ENCODE measurements at regions of chr1 and their contacts with region 1.

Region 1: GRCh38 chr1:20981915-20982314 is 194.8 kb downstream of the EIF4G3 start:
- DNase-seq: no peak
- ATAC-seq: no peak

Region 2: DNA sequence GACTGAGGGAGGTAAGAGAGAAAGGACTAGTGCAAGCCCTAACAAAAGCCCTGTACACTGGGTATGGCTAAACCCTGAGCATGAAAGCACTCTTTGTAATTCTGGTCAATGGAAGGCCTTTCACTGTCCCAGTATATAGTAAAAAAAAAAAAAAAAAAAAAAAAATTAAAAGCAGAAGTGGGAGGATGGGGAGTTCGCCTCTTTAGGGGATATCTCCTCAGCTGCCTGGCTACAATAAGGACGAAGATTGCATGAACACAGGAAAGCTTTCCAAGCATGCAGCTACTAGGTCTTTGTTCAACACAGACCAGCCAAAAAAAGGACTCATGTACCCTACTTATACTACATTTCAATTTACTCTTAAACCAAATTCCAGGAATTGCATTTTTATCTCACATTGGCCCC is 135.7 kb after region 1 on chr1:
- intact Hi-C with region 1: no loop called
- DNase-seq: no peak
- ATAC-seq: peak; percentile 81

Region 3: GRCh38 chr1:21176586-21177555 is 195.0 kb after region 1 on chr1 and contains the start of gene EIF4G3:
- intact Hi-C with region 1: loop called (anchors 5 kb)
- DNase-seq: peak; percentile 97
- ATAC-seq: peak; percentile 98
- total RNA-seq, gene EIF4G3: 25.6 TPM

Region 4: DNA sequence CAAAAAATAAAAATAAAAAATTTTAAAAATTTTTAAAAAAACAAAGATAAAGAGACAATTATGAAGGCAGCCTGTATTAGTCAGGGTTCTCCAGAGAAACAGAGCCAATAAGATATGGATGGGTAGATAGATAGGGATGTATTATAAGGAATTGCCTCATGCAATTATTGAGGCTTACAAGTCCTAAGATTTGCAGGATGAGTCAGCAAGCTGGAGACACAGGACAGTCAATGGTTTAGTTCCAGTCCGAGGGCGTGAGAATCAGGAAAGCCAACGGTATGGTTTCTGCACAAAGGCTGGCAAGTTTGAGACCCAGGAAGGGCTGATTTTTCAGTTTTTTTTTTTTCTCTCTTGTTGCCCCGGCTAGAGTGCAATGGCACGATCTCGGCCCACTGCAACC is 218.9 kb after region 1 on chr1:
- intact Hi-C with region 1: loop called (anchors 1 kb)
- DNase-seq: no peak
- ATAC-seq: no peak

Region 5: GRCh38 chr1:21782868-21783678 is 801.2 kb after region 1 on chr1 and contains the start of gene USP48:
- intact Hi-C with region 1: no loop called
- DNase-seq: peak; percentile 98
- ATAC-seq: peak; percentile 98
- total RNA-seq, gene USP48: 42.7 TPM